Naive thymus-derived CD4-positive, alpha-beta T cell (primary cell): ENCODE measurements at regions of chr12 and their contacts with region 1.

Region 1: DNA sequence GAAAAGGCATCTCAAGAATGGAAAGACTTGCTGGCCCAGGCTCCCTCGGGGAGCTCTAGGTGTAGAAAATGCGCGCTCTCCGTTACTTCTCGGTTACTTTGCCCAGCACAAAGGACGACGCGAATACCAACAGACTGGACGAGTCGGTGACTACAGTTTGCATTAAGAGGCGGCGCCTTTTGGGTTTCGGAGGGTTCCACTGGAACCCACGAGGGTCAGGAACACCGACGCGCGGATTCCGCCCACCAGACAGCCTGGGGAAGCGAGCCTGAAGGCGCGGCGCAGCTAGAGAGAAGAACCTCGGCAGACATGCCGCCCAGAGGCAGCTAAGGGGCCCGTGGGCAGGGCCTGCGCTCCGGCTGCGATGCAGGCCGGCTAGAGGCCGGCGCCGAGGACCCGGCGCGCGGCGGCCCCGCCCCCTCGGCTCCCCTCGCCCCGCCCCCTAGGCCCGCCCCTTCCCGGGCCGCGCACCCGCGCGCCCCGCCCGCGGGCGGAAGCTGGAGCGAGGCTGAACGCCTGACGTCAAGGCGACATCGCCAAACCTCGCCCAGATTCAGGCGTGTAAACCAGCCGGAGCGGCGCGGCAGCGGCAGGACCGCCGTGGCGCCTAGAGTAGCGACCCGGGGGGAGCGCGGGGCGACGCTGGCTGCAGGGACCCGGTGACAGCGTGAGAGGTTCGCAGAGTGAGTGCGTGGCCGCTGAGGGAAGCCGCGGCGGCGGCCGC is at the start of gene RAP1B:
- DNase-seq: peak; percentile 86 to 92 (median 89)
- ATAC-seq: peak; percentile 92
- H3K4me3 ChIP-seq: peak within 1 kb of the TSS; percentile 89
- H3K4me3 Mint-ChIP-seq: peak within 1 kb of the TSS; percentile 93 to 99 (median 98)
- H3K27ac ChIP-seq: peak within 1 kb of the TSS; percentile 97
- H3K27ac Mint-ChIP-seq: peak within 1 kb of the TSS; percentile 95 to 99 (median 98)
- H3K4me1 ChIP-seq: peaks cover 15 to 18% of the 10 kb centered on the region in 2 donors
- H3K4me1 Mint-ChIP-seq: peaks cover 36 to 46% (median 41%) of the 10 kb centered on the region in 7 donors
- H3K27me3 ChIP-seq: no peaks in the 10 kb centered on the region
- H3K27me3 Mint-ChIP-seq: no peaks in the 10 kb centered on the region
- total RNA-seq, gene RAP1B: 202 to 287 (median 223) TPM

Region 2: DNA sequence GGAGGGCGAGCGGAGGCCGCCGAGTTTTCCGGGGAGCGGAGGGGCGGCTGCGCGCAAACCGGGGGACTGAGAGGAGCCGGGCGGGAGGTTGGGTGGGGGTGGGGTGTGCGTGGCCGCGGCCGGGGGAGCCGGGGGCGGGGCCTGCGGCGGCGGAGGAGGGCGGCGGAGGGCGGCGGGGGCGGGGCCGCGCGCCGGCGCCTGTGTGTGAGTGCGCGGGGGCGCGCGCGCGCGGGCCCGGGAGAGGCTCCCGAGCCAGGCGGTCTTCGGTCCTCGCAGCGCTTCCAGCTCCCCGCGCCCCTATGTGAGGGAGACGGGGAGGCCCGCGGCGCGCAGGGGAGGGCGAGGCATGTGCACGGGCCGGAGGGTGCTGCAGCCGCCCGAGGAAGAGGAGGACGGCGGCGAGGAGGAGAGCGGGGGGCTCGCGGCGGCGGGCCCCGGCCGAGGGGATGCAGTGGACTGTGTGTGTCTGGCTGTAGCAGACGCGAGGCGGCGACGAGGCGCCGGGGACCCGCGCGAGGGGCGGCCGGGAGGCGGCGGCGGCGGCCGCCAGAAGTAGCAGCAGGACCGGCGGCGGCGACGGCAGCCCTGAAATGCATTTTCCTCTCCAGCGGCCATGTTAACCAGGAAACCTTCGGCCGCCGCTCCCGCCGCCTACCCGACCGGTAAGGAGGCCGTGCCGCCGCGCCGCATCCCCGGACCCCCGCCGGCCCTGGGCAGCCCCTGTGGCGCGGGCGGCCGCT is 961.8 kb before region 1 on chr12 and contains the start of gene DYRK2:
- CTCF ChIA-PET with region 1: no interaction called
- POLR2A ChIA-PET with region 1: no interaction called
- intact Hi-C with region 1: loop called in 1 of 2 experiments (anchors 5 kb)
- DNase-seq: peak; percentile 65 to 83 (median 78)
- ATAC-seq: peak; percentile 81
- H3K4me3 ChIP-seq: peak within 1 kb of the TSS; percentile 93
- H3K4me3 Mint-ChIP-seq: peak within 1 kb of the TSS; percentile 93 to 100 (median 98)
- H3K27ac ChIP-seq: peak within 1 kb of the TSS; percentile 90
- H3K27ac Mint-ChIP-seq: peak within 1 kb of the TSS; percentile 89 to 100 (median 98)
- H3K4me1 ChIP-seq: peaks cover 22 to 23% of the 10 kb centered on the region in 2 donors
- H3K4me1 Mint-ChIP-seq: peaks cover 38 to 48% (median 42%) of the 10 kb centered on the region in 7 donors
- H3K27me3 ChIP-seq: no peaks in the 10 kb centered on the region
- H3K27me3 Mint-ChIP-seq: peaks cover 0 to 13% (median 0%) of the 10 kb centered on the region in 5 donors
- total RNA-seq, gene DYRK2: 55.3 to 157 (median 119) TPM

Region 3: GRCh38 chr12:68451261-68452077 is 159.1 kb before region 1 on chr12:
- CTCF ChIA-PET with region 1: interaction called, 3 read pairs
- POLR2A ChIA-PET with region 1: interaction called, 7 read pairs
- intact Hi-C with region 1: loop called (anchors 1 to 2 kb)
- DNase-seq: peak in 7 of 9 donors; percentile 8 to 59 (median 29)
- ATAC-seq: peak; percentile 68
- H3K4me3 ChIP-seq: peak overlapping the region; percentile 28
- H3K4me3 Mint-ChIP-seq: peak overlapping the region; percentile 61 to 85 (median 72)
- H3K27ac ChIP-seq: peak overlapping the region; percentile 48
- H3K27ac Mint-ChIP-seq: peak overlapping the region; percentile 49 to 97 (median 76)
- H3K4me1 ChIP-seq: peaks cover 64 to 68% of the 10 kb centered on the region in 2 donors
- H3K4me1 Mint-ChIP-seq: peaks cover 72 to 100% (median 95%) of the 10 kb centered on the region in 7 donors
- H3K27me3 ChIP-seq: no peaks in the 10 kb centered on the region
- H3K27me3 Mint-ChIP-seq: no peaks in the 10 kb centered on the region

Region 4: GRCh38 chr12:68538726-68539614 is 71.6 kb before region 1 on chr12:
- CTCF ChIA-PET with region 1: interaction called, 3 read pairs
- POLR2A ChIA-PET with region 1: interaction called, 89 read pairs
- intact Hi-C with region 1: loop called (anchors 1 to 2 kb)
- DNase-seq: peak in 8 of 9 donors; percentile 47 to 84 (median 76)
- ATAC-seq: peak; percentile 96
- H3K4me3 ChIP-seq: peak overlapping the region; percentile 23
- H3K4me3 Mint-ChIP-seq: peak overlapping the region; percentile 69 to 84 (median 74)
- H3K27ac ChIP-seq: peak overlapping the region; percentile 57
- H3K27ac Mint-ChIP-seq: peak overlapping the region; percentile 83 to 96 (median 88)
- H3K4me1 ChIP-seq: peaks cover 35 to 40% of the 10 kb centered on the region in 2 donors
- H3K4me1 Mint-ChIP-seq: peaks cover 26 to 64% (median 61%) of the 10 kb centered on the region in 7 donors
- H3K27me3 ChIP-seq: no peaks in the 10 kb centered on the region
- H3K27me3 Mint-ChIP-seq: no peaks in the 10 kb centered on the region

Region 5: GRCh38 chr12:68595241-68595640 is 15.3 kb before region 1 on chr12:
- CTCF ChIA-PET with region 1: interaction called, 4 read pairs
- POLR2A ChIA-PET with region 1: interaction called, 167 read pairs
- intact Hi-C with region 1: loop called (anchors 1 kb)
- DNase-seq: no peak
- ATAC-seq: no peak
- H3K4me3 ChIP-seq: no peak overlapping the region
- H3K4me3 Mint-ChIP-seq: peak overlapping the region in 4 of 10 donors; percentile 1 to 28 (median 22)
- H3K27ac ChIP-seq: no peak overlapping the region
- H3K27ac Mint-ChIP-seq: peak overlapping the region; percentile 33 to 76 (median 59)
- H3K4me1 ChIP-seq: peaks cover 24 to 71% of the 10 kb centered on the region in 2 donors
- H3K4me1 Mint-ChIP-seq: peaks cover 39 to 89% (median 79%) of the 10 kb centered on the region in 7 donors
- H3K27me3 ChIP-seq: no peaks in the 10 kb centered on the region
- H3K27me3 Mint-ChIP-seq: no peaks in the 10 kb centered on the region

Region 6: GRCh38 chr12:68641138-68641537 is 30.6 kb after region 1 on chr12:
- CTCF ChIA-PET with region 1: no interaction called
- POLR2A ChIA-PET with region 1: interaction called, 10 read pairs
- intact Hi-C with region 1: loop called (anchors 1 to 5 kb)
- DNase-seq: peak in 8 of 9 donors; percentile 15 to 45 (median 29)
- ATAC-seq: peak; percentile 73
- H3K4me3 ChIP-seq: no peak overlapping the region
- H3K4me3 Mint-ChIP-seq: peak overlapping the region; percentile 17 to 81 (median 74)
- H3K27ac ChIP-seq: peak overlapping the region; percentile 57
- H3K27ac Mint-ChIP-seq: peak overlapping the region; percentile 39 to 90 (median 83)
- H3K4me1 ChIP-seq: peaks cover 65% of the 10 kb centered on the region in 2 donors
- H3K4me1 Mint-ChIP-seq: peaks cover 47 to 96% (median 86%) of the 10 kb centered on the region in 7 donors
- H3K27me3 ChIP-seq: no peaks in the 10 kb centered on the region
- H3K27me3 Mint-ChIP-seq: no peaks in the 10 kb centered on the region

Region 7: DNA sequence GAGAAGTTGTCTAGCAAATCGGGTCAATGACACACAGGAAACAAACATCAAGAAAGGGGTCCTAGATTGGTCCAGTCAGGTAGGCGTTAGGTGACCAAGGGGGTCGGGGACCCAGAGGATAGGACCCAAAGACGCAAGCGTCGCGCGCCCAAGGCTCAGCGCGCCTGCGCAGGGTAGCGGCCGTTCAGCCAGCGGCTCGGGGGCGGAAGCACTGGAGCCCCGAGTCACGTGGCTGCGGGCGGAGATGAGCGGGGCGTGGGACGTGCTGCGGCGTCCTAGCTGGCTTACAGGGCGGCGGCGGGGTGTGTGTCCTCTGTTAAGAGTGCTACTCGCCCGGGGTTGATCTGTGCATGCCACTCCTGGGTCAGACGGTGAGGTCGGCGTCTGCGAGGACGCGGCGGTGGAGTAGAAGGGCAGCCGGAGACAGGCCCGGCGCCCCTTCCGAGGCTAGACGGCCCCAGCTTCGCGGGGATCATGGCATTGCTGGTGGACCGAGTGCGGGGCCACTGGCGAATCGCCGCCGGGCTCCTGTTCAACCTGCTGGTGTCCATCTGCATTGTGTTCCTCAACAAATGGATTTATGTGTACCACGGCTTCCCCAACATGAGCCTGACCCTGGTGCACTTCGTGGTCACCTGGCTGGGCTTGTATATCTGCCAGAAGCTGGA is 135.5 kb after region 1 on chr12 and contains the start of gene SLC35E3:
- CTCF ChIA-PET with region 1: no interaction called
- POLR2A ChIA-PET with region 1: interaction called, 6 read pairs
- intact Hi-C with region 1: loop called (anchors 1 to 2 kb)
- DNase-seq: peak; percentile 81 to 91 (median 86)
- ATAC-seq: peak; percentile 99
- H3K4me3 ChIP-seq: peak within 1 kb of the TSS; percentile 98
- H3K4me3 Mint-ChIP-seq: peak within 1 kb of the TSS; percentile 91 to 99 (median 96)
- H3K27ac ChIP-seq: peak within 1 kb of the TSS; percentile 79
- H3K27ac Mint-ChIP-seq: peak within 1 kb of the TSS; percentile 92 to 97 (median 96)
- H3K4me1 ChIP-seq: peaks cover 7 to 16% of the 10 kb centered on the region in 2 donors
- H3K4me1 Mint-ChIP-seq: peaks cover 27 to 64% (median 54%) of the 10 kb centered on the region in 7 donors
- H3K27me3 ChIP-seq: no peaks in the 10 kb centered on the region
- H3K27me3 Mint-ChIP-seq: no peaks in the 10 kb centered on the region
- total RNA-seq, gene SLC35E3: 9.0 to 12.1 (median 9.2) TPM